Left cardiac atrium (tissue), 4 donors: ENCODE measurements at regions of chr22 and their contacts with region 1.

Region 1: GRCh38 chr22:37905534-37906363 is at the start of gene MICALL1:
- DNase-seq: peak; percentile 80
- ATAC-seq: peak; percentile 89 to 90
- total RNA-seq, gene MICALL1: 14.3 to 18.3 TPM

Region 2: GRCh38 chr22:37708580-37709444 is 196.9 kb before region 1 on chr22:
- intact Hi-C with region 1: no loop called
- DNase-seq: no peak
- ATAC-seq: peak; percentile 50 to 66

Region 3: GRCh38 chr22:37933711-37934376 is 28.1 kb after region 1 on chr22:
- intact Hi-C with region 1: loop called in 1 of 2 experiments (anchors 1 kb)
- DNase-seq: peak; percentile 91
- ATAC-seq: peak; percentile 96 to 98